Thyroid gland (tissue), 4 donors: ENCODE measurements at regions of chr21 and their contacts with region 1.

Region 1: GRCh38 chr21:14864211-14865021 is 200.4 kb downstream of the NRIP1 start:
- DNase-seq: peak; percentile 37 to 44
- H3K4me3 ChIP-seq: no peak overlapping the region
- H3K27ac ChIP-seq: no peak overlapping the region
- H3K4me1 ChIP-seq: peaks cover 0 to 6% of the 10 kb centered on the region in 2 donors
- H3K27me3 ChIP-seq: no peaks in the 10 kb centered on the region
- CTCF ChIP-seq: peak in 3 of 6 experiments; percentile 18 to 34 (median 21)
- POLR2A ChIP-seq: no peak

Region 2: DNA sequence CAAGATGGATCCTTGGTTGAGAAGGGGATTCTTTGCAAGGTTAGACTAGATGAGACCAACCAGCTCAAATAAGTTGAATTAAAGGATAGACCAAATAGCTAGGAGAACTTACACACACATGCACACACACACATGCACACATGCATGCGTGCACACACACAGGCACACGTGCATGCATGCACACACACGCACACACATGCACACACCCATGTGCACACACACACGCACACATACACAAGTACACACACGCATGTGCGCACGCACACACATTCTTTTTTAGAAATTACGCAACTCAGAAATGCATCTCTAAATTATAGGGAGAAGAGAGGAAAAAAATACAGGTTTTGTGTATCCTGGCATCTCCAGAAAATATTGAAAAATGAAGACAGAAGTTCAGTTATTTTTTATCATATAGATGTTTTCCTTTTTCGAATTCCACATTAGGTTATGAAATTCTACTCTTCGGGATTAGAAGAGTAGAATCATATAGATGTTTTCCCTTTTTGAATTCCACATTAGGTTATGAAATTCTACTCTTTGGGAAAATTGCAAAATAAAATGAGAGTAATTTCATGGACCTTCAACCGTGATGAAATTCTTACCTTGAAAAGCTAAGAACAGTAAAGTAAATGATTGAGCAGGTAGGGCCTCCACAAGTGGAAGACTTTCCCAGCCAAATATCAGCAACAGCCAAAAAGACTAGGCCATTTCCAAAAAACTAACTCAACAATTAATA is 622.2 kb after region 1 on chr21:
- intact Hi-C with region 1: loop called (anchors 5 kb)
- DNase-seq: no peak
- H3K4me3 ChIP-seq: no peak overlapping the region
- H3K27ac ChIP-seq: no peak overlapping the region
- H3K4me1 ChIP-seq: no peaks in the 10 kb centered on the region
- H3K27me3 ChIP-seq: no peaks in the 10 kb centered on the region
- CTCF ChIP-seq: no peak
- POLR2A ChIP-seq: no peak